ENCODE measurements at regions of chr7 and their contacts with region 1.

Region 1: GRCh38 chr7:128425850-128426249 is 16.1 kb upstream of the IMPDH1 start:
- DNase-seq: peak; percentile 93
- H3K4me3 Mint-ChIP-seq: no peak overlapping the region
- H3K27ac Mint-ChIP-seq: no peak overlapping the region
- H3K4me1 Mint-ChIP-seq: no peaks in the 10 kb centered on the region
- H3K27me3 Mint-ChIP-seq: peaks cover 3% of the 10 kb centered on the region

Region 2: DNA sequence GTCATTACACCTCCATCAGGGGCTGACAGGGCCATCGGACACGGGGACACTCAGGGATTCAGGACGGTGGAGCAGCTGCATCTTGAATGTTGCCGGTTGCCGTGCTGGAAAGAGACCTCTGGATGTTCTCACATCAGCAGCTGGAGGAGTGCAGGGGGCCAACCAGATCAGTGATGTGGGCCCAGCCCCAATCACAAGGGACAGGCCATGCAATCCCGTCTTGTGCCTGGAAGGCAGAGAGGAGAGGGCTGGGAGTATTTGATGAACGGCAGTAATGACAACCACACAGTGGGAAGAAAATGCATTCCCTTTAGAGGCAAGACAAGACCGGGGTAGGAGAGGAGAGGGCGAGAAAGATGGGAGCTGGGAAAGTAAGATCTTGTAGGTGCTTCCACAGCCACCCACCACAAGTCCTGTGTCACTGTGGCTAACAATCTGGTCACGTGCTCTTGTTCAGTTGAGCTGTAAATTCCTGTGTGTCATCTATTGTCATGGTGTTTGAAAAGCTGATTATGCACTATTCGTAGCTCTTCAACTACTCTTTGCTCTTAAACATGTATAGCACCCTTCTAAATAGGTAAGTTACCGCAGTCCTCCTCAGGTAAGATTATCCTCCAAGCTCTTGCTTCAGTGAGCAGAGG is 270.6 kb before region 1 on chr7:
- CTCF ChIA-PET with region 1: no interaction called
- intact Hi-C with region 1: no loop called
- DNase-seq: no peak
- H3K4me3 Mint-ChIP-seq: no peak overlapping the region
- H3K27ac Mint-ChIP-seq: no peak overlapping the region
- H3K4me1 Mint-ChIP-seq: no peaks in the 10 kb centered on the region
- H3K27me3 Mint-ChIP-seq: peaks cover 3% of the 10 kb centered on the region

Region 3: GRCh38 chr7:128266883-128267607 is 158.8 kb before region 1 on chr7:
- CTCF ChIA-PET with region 1: no interaction called
- intact Hi-C with region 1: no loop called
- DNase-seq: no peak
- H3K4me3 Mint-ChIP-seq: no peak overlapping the region
- H3K27ac Mint-ChIP-seq: no peak overlapping the region
- H3K4me1 Mint-ChIP-seq: peaks cover 2% of the 10 kb centered on the region
- H3K27me3 Mint-ChIP-seq: peaks cover 27% of the 10 kb centered on the region

Region 4: GRCh38 chr7:128361411-128362379 is 64.2 kb before region 1 on chr7 and contains the start of gene PRRT4:
- CTCF ChIA-PET with region 1: interaction called, 14 read pairs
- intact Hi-C with region 1: no loop called
- DNase-seq: peak; percentile 42
- H3K4me3 Mint-ChIP-seq: peak within 1 kb of the TSS; percentile 73
- H3K27ac Mint-ChIP-seq: no peak within 1 kb of the TSS
- H3K4me1 Mint-ChIP-seq: peaks cover 22% of the 10 kb centered on the region
- H3K27me3 Mint-ChIP-seq: peaks cover 46% of the 10 kb centered on the region
- total RNA-seq, gene PRRT4: 0.40 TPM in 1 of 2 experiments, not detected in the other

Region 5: DNA sequence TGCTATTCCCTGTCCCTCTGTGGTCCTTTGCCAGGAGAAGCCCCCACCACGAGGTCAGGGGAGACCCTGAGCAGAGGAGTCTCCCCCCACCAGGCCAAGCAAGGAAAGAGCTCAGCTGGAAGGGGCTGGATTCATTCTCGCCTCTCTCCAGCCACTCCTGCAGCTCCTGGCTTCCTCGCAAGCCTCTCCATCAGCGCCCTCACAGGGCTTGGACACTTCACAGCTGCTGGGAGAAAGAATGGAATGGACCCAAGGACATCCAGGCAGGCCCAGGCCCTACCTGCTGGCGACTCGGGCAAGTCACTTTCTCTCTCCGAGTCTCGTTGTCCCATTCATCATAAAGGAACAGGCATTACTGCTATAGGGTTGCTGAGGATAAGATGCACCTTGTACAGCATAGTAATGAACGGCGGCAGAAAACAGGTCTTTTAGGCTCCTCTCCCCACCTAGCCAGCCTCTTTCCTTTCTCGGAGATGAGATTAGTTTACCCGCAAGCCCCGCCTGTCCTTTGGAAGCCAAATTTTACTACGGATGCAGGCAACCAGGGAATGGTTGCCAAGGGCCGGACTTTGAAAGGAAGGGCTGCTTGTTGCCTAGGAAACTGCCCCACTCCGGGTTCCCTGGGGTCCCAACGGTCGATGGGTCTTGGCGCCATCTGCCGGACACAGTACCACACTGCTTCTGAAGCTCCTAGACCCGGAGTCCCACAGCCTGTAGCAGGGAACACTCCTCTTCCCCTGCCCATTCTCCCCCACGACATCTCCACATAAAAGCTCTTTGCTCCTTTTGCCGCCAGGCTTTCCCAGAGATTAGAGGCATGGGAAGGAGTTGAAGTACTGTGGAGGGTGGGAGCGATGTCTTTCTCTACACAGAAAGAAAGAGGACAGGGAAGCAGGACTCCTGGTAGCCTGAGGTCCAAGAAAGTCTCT is 38.4 kb before region 1 on chr7:
- CTCF ChIA-PET with region 1: interaction called, 49 read pairs
- intact Hi-C with region 1: loop called (anchors 5 kb)
- DNase-seq: peak; percentile 80
- H3K4me3 Mint-ChIP-seq: no peak overlapping the region
- H3K27ac Mint-ChIP-seq: no peak overlapping the region
- H3K4me1 Mint-ChIP-seq: no peaks in the 10 kb centered on the region
- H3K27me3 Mint-ChIP-seq: no peaks in the 10 kb centered on the region

Region 6: DNA sequence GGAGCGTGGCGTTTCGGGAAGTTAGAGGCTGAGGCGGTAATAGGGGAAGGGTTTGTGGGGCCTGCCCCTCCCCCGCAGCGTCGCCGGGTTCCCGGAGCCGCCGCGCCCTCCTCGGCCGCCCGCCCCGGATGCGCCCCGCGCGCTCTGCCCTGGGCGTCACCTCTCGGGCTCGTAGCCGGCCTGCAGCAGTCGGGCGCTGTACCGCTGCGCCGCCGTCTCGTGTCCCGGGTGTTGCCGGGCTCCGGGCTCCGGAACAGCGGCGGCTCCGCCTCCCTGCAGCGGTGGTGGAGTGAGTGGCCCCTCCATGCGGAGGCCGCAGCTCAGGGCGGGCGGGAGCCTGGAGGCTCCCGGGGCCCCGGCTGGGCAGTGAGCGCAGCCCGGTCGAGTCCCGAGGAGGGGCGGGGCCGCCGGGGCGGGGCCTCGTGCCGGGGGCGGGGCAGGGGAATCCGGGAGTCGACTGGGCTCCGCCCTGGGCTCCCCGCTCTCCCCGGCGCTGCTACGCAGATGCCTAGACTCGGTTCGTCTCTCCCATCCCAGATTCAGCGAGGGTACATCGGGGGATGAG is 16.2 kb before region 1 on chr7 and contains the start of gene IMPDH1:
- CTCF ChIA-PET with region 1: interaction called, 100 read pairs
- intact Hi-C with region 1: loop called (anchors 1 kb)
- DNase-seq: peak; percentile 86
- H3K4me3 Mint-ChIP-seq: peak within 1 kb of the TSS; percentile 85
- H3K27ac Mint-ChIP-seq: peak within 1 kb of the TSS; percentile 47
- H3K4me1 Mint-ChIP-seq: peaks cover 20% of the 10 kb centered on the region
- H3K27me3 Mint-ChIP-seq: peaks cover 2% of the 10 kb centered on the region
- total RNA-seq, gene IMPDH1: 44.3 to 45.9 TPM

Region 7: GRCh38 chr7:128437426-128438332 is 11.8 kb after region 1 on chr7:
- CTCF ChIA-PET with region 1: interaction called, 138 read pairs
- intact Hi-C with region 1: no loop called
- DNase-seq: no peak
- H3K4me3 Mint-ChIP-seq: no peak overlapping the region
- H3K27ac Mint-ChIP-seq: no peak overlapping the region
- H3K4me1 Mint-ChIP-seq: no peaks in the 10 kb centered on the region
- H3K27me3 Mint-ChIP-seq: no peaks in the 10 kb centered on the region

Measured in activated naive CD4-positive, alpha-beta T cell treated with anti-CD3 and anti-CD28 coated beads for 36 hours (primary cell).